IMR-90 (cell line): ENCODE measurements at regions of chr1 and their contacts with region 1.

Region 1: DNA sequence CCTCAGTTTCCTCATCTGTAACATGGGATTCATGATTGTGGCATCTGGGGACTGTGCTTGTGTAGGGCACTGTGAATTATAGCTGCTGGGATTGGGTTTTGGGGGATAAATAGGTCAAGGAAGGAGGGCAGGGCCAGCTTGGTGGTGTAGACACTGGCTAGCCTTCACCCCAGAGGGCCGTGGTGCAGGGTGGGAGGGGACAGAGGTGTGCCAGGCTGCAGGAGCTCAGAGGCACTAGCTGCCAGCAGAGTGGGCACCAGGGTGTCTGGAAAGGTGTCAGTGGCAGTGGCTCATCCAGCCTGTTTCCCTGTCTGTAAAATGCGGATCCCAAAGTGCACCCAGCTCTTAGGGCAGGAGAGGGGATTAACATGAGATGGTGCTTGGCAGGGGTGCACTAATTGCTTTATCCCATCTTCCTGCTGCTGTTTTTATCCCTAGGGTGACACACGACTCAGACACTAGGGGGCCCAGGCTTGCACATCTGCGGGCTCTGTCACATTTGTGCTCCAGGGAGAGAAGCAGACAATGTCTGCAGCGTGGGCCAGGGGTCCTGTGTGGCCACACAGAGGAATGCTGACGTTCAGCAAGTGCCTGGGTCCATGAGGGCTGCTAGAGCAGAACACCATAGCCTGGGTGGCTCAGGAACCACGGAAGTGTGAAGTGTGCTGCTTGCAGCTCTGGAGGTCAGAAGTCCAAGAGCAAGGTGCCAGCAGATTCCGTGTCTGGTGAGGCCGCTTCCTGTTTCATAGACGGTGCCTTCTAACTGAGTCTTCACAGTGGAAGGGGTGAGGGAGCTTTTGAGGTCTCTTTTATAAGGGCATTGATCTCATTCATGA is 19.3 kb downstream of the OBSCN start:
- DNase-seq: peak; percentile 63
- ATAC-seq: peak; percentile 40
- H3K4me3 ChIP-seq: no peak overlapping the region
- H3K27ac ChIP-seq: peak overlapping the region; percentile 99
- H3K4me1 ChIP-seq: peaks cover 18% of the 10 kb centered on the region
- H3K27me3 ChIP-seq: no peaks in the 10 kb centered on the region
- CTCF ChIP-seq: peak; percentile 55
- POLR2A ChIP-seq: no peak
- RAD21 ChIP-seq: peak; percentile 46

Region 2: DNA sequence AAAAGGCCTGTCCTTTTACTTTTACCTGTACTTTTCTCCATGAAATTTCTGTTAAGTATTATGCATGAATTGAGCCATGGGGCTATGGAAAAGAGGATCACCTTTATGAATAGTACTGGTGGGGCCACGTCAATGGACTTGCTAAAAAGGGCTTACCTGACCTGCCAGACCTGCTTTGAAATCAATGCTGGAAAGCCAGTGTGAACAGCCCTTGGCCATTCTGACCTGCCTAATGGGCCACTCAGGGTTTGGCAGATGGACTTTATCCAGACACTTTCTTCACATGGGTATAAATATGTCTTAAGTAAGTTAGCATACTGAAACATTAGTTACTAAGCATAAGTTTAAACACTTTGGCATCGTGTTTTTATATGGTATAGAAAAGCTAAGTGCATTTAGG is 95.4 kb before region 1 on chr1:
- CTCF ChIA-PET with region 1: no interaction called
- POLR2A ChIA-PET with region 1: no interaction called
- dilution Hi-C with region 1: no loop called
- in situ Hi-C with region 1: no loop called
- intact Hi-C with region 1: no loop called
- DNase-seq: no peak
- ATAC-seq: no peak
- H3K4me3 ChIP-seq: no peak overlapping the region
- H3K27ac ChIP-seq: no peak overlapping the region
- H3K4me1 ChIP-seq: no peaks in the 10 kb centered on the region
- H3K27me3 ChIP-seq: peaks cover 21% of the 10 kb centered on the region
- CTCF ChIP-seq: no peak
- POLR2A ChIP-seq: no peak
- RAD21 ChIP-seq: no peak

Region 3: GRCh38 chr1:228154670-228155571 is 72.3 kb before region 1 on chr1:
- CTCF ChIA-PET with region 1: no interaction called
- POLR2A ChIA-PET with region 1: no interaction called
- dilution Hi-C with region 1: no loop called
- in situ Hi-C with region 1: no loop called
- intact Hi-C with region 1: no loop called
- DNase-seq: no peak
- ATAC-seq: no peak
- H3K4me3 ChIP-seq: no peak overlapping the region
- H3K27ac ChIP-seq: no peak overlapping the region
- H3K4me1 ChIP-seq: peaks cover 14% of the 10 kb centered on the region
- H3K27me3 ChIP-seq: no peaks in the 10 kb centered on the region
- CTCF ChIP-seq: no peak
- POLR2A ChIP-seq: no peak
- RAD21 ChIP-seq: no peak

Region 4: GRCh38 chr1:228275739-228276421 is 48.7 kb after region 1 on chr1:
- CTCF ChIA-PET with region 1: no interaction called
- POLR2A ChIA-PET with region 1: interaction called, 3 read pairs
- dilution Hi-C with region 1: no loop called
- in situ Hi-C with region 1: no loop called
- intact Hi-C with region 1: loop called (anchors 2 kb)
- DNase-seq: peak; percentile 82
- ATAC-seq: peak; percentile 98
- H3K4me3 ChIP-seq: peak overlapping the region; percentile 78
- H3K27ac ChIP-seq: peak overlapping the region; percentile 80
- H3K4me1 ChIP-seq: peaks cover 8% of the 10 kb centered on the region
- H3K27me3 ChIP-seq: no peaks in the 10 kb centered on the region
- CTCF ChIP-seq: no peak
- POLR2A ChIP-seq: no peak
- RAD21 ChIP-seq: no peak

Region 5: DNA sequence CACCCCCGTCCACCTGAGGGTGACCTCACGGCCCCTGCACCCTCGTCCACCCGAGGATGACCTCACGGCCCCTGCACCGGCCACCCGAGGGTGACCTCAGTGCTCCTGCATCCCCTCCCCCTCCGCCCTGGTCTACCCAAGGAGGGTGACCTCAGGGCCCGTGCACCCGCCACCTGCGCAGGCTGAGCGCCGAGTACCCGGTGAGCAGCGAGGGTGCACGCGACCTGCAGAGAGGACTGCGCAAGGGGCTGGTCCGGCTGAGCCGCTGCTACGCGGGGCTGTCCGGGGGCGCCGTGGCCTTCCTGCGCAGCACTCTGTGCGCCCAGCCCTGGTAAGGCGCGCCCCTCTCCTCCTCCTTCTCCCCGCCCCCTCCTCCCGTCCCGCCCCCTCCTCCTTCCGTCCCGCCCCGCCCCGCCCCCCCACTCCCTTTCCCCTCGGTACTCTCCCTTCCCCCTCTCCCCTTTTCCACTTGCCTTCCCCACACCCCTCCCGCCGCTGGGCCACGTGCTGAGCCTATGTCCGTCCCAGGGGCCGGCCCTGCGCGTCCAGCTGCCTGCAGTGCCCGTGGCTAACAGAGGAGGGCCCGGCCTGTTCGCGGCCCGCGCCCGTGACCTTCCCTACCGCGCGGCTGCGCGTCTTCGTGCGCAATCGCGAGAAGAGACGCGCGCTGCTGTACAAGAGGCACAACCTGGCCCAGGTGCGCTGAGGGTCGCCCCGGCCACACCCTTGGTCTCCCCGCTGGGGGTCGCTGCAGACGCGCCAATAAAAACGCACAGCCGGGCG is 151.1 kb after region 1 on chr1:
- CTCF ChIA-PET with region 1: no interaction called
- POLR2A ChIA-PET with region 1: no interaction called
- dilution Hi-C with region 1: no loop called
- in situ Hi-C with region 1: no loop called
- intact Hi-C with region 1: loop called (anchors 5 kb)
- DNase-seq: peak; percentile 69
- ATAC-seq: peak; percentile 79
- H3K4me3 ChIP-seq: peak overlapping the region; percentile 35
- H3K27ac ChIP-seq: no peak overlapping the region; the same call in 1 of the 2 replicates
- H3K4me1 ChIP-seq: peaks cover 18% of the 10 kb centered on the region; the same call in 1 of the 2 replicates
- H3K27me3 ChIP-seq: no peaks in the 10 kb centered on the region
- CTCF ChIP-seq: peak; percentile 51
- POLR2A ChIP-seq: no peak
- RAD21 ChIP-seq: peak; percentile 41

Region 6: GRCh38 chr1:228393248-228393699 is 166.1 kb after region 1 on chr1:
- CTCF ChIA-PET with region 1: no interaction called
- POLR2A ChIA-PET with region 1: no interaction called
- dilution Hi-C with region 1: no loop called
- in situ Hi-C with region 1: no loop called
- intact Hi-C with region 1: loop called (anchors 5 kb)
- DNase-seq: peak; percentile 73
- ATAC-seq: peak; percentile 90
- H3K4me3 ChIP-seq: no peak overlapping the region
- H3K27ac ChIP-seq: peak overlapping the region; percentile 39; the same call in 1 of the 2 replicates
- H3K4me1 ChIP-seq: peaks cover 20% of the 10 kb centered on the region
- H3K27me3 ChIP-seq: no peaks in the 10 kb centered on the region
- CTCF ChIP-seq: peak; percentile 60
- POLR2A ChIP-seq: no peak
- RAD21 ChIP-seq: peak; percentile 46